Naive thymus-derived CD4-positive, alpha-beta T cell (primary cell): ENCODE measurements at regions of chr3 and their contacts with region 1.

Region 1: GRCh38 chr3:184135149-184135910 is at the start of gene EIF2B5:
- DNase-seq: peak; percentile 63 to 87 (median 84)
- ATAC-seq: peak; percentile 96
- H3K4me3 ChIP-seq: peak within 1 kb of the TSS; percentile 83
- H3K4me3 Mint-ChIP-seq: peak within 1 kb of the TSS; percentile 96 to 100 (median 98)
- H3K27ac ChIP-seq: peak within 1 kb of the TSS; percentile 86
- H3K27ac Mint-ChIP-seq: peak within 1 kb of the TSS; percentile 92 to 98 (median 97)
- H3K4me1 ChIP-seq: peaks cover 4 to 10% of the 10 kb centered on the region in 2 donors
- H3K4me1 Mint-ChIP-seq: peaks cover 29 to 40% (median 38%) of the 10 kb centered on the region in 7 donors
- H3K27me3 ChIP-seq: no peaks in the 10 kb centered on the region
- H3K27me3 Mint-ChIP-seq: peaks cover 0 to 10% (median 0%) of the 10 kb centered on the region in 5 donors
- total RNA-seq, gene EIF2B5: 47.2 to 87.2 (median 67.7) TPM

Region 2: DNA sequence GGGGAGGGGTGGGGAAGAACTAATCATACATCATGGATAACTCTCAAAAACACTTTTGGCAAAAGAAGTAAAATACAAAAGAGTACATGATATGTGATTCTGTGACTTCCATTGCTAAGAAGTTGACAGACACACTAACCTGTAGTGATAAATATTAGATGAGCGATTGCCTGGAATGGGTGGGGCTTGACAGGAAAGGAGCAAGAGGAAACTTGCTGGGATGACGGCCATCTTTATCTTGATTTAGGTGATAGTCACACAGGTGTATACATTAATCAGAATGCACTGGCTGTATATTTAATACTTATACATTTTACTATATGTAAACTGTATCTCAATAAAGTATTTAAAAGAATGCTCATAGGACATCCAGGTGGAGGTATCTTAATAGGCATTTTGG is 263.8 kb before region 1 on chr3:
- CTCF ChIA-PET with region 1: no interaction called
- POLR2A ChIA-PET with region 1: no interaction called
- intact Hi-C with region 1: no loop called
- DNase-seq: no peak
- ATAC-seq: no peak
- H3K4me3 ChIP-seq: no peak overlapping the region
- H3K4me3 Mint-ChIP-seq: no peak overlapping the region
- H3K27ac ChIP-seq: no peak overlapping the region
- H3K27ac Mint-ChIP-seq: peak overlapping the region in 1 of 9 donors; percentile 5
- H3K4me1 ChIP-seq: peaks cover 0 to 14% of the 10 kb centered on the region in 2 donors
- H3K4me1 Mint-ChIP-seq: peaks cover 13 to 58% (median 48%) of the 10 kb centered on the region in 7 donors
- H3K27me3 ChIP-seq: no peaks in the 10 kb centered on the region
- H3K27me3 Mint-ChIP-seq: no peaks in the 10 kb centered on the region

Region 3: GRCh38 chr3:183884427-183885296 is 250.7 kb before region 1 on chr3 and contains the start of gene PARL:
- CTCF ChIA-PET with region 1: no interaction called
- POLR2A ChIA-PET with region 1: no interaction called
- intact Hi-C with region 1: loop called (anchors 1 kb)
- DNase-seq: peak; percentile 88 to 99 (median 95)
- ATAC-seq: peak; percentile 100
- H3K4me3 ChIP-seq: peak within 1 kb of the TSS; percentile 85
- H3K4me3 Mint-ChIP-seq: peak within 1 kb of the TSS; percentile 89 to 98 (median 96)
- H3K27ac ChIP-seq: peak within 1 kb of the TSS; percentile 77
- H3K27ac Mint-ChIP-seq: peak within 1 kb of the TSS; percentile 86 to 96 (median 93)
- H3K4me1 ChIP-seq: peaks cover 15% of the 10 kb centered on the region in 2 donors
- H3K4me1 Mint-ChIP-seq: peaks cover 15 to 53% (median 41%) of the 10 kb centered on the region in 7 donors
- H3K27me3 ChIP-seq: no peaks in the 10 kb centered on the region
- H3K27me3 Mint-ChIP-seq: peaks cover 0 to 3% (median 0%) of the 10 kb centered on the region in 5 donors
- total RNA-seq, gene PARL: 41.6 to 50.4 (median 47.1) TPM

Region 4: GRCh38 chr3:184085389-184085852 is 49.9 kb before region 1 on chr3:
- CTCF ChIA-PET with region 1: no interaction called
- POLR2A ChIA-PET with region 1: no interaction called
- intact Hi-C with region 1: loop called in 1 of 2 experiments (anchors 10 kb)
- DNase-seq: no peak
- ATAC-seq: no peak
- H3K4me3 ChIP-seq: no peak overlapping the region
- H3K4me3 Mint-ChIP-seq: peak overlapping the region in 1 of 10 donors; percentile 18
- H3K27ac ChIP-seq: no peak overlapping the region
- H3K27ac Mint-ChIP-seq: peak overlapping the region in 4 of 9 donors; percentile 7 to 73 (median 37)
- H3K4me1 ChIP-seq: no peaks in the 10 kb centered on the region
- H3K4me1 Mint-ChIP-seq: peaks cover 5 to 8% (median 7%) of the 10 kb centered on the region in 7 donors
- H3K27me3 ChIP-seq: no peaks in the 10 kb centered on the region
- H3K27me3 Mint-ChIP-seq: no peaks in the 10 kb centered on the region

Region 5: GRCh38 chr3:184185461-184186308 is 50.4 kb after region 1 on chr3 and contains the start of gene ABCF3:
- CTCF ChIA-PET with region 1: no interaction called
- POLR2A ChIA-PET with region 1: interaction called, 3 read pairs
- intact Hi-C with region 1: loop called (anchors 1 kb)
- DNase-seq: peak; percentile 98 to 100 (median 99)
- ATAC-seq: peak; percentile 96
- H3K4me3 ChIP-seq: peak within 1 kb of the TSS; percentile 81
- H3K4me3 Mint-ChIP-seq: peak within 1 kb of the TSS; percentile 91 to 100 (median 98)
- H3K27ac ChIP-seq: peak within 1 kb of the TSS; percentile 89
- H3K27ac Mint-ChIP-seq: peak within 1 kb of the TSS; percentile 89 to 98 (median 97)
- H3K4me1 ChIP-seq: peaks cover 18 to 24% of the 10 kb centered on the region in 2 donors
- H3K4me1 Mint-ChIP-seq: peaks cover 31 to 52% (median 43%) of the 10 kb centered on the region in 7 donors
- H3K27me3 ChIP-seq: no peaks in the 10 kb centered on the region
- H3K27me3 Mint-ChIP-seq: no peaks in the 10 kb centered on the region
- total RNA-seq, gene ABCF3: 79.3 to 153 (median 117) TPM

Region 6: DNA sequence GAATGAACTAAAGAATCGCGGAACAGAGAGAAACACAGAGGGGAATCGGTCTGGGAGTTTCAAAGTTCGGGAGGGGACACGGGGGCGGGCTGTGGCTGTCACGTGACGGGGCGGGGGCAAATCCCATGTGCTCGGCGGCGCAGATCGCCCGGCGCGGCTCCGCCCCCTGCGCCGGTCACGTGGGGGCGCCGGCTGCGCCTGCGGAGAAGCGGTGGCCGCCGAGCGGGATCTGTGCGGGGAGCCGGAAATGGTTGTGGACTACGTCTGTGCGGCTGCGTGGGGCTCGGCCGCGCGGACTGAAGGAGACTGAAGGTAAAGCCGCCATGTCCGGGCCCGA is 179.0 kb after region 1 on chr3 and contains the start of gene EIF4G1:
- CTCF ChIA-PET with region 1: no interaction called
- POLR2A ChIA-PET with region 1: no interaction called
- intact Hi-C with region 1: loop called in 1 of 2 experiments (anchors 1 kb)
- DNase-seq: peak; percentile 89 to 95 (median 91)
- ATAC-seq: peak; percentile 95
- H3K4me3 ChIP-seq: peak within 1 kb of the TSS; percentile 73
- H3K4me3 Mint-ChIP-seq: peak within 1 kb of the TSS; percentile 79 to 94 (median 88)
- H3K27ac ChIP-seq: peak within 1 kb of the TSS; percentile 93
- H3K27ac Mint-ChIP-seq: peak within 1 kb of the TSS; percentile 68 to 95 (median 89)
- H3K4me1 ChIP-seq: peaks cover 0 to 17% of the 10 kb centered on the region in 2 donors
- H3K4me1 Mint-ChIP-seq: peaks cover 15 to 35% (median 28%) of the 10 kb centered on the region in 7 donors
- H3K27me3 ChIP-seq: no peaks in the 10 kb centered on the region
- H3K27me3 Mint-ChIP-seq: no peaks in the 10 kb centered on the region
- total RNA-seq, gene EIF4G1: 200 to 341 (median 256) TPM